ENCODE measurements at regions of chr21 and their contacts with region 1.

Region 1: DNA sequence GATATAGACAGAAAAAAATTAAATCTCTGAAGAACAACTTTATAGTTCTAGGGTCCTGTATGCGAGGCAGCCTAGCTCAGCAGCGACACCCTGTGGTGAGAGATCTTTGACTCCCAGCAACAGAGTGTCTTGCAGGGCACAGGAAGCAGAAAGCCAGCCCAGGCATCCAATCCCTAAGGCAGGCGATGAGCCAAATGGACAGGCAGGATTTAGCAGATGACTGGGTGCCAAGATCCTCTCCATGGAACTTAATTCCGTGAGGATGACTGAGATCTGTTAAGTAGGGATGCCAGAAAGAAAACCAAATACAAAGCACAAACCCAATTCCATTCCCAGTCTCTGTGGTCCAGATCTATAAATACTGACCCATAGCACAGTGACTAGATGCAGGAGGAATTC is 38.8 kb downstream of the HLCS start:
- DNase-seq: peak; percentile 89
- H3K4me3 ChIP-seq: no peak overlapping the region
- H3K27ac ChIP-seq: peak overlapping the region; percentile 57 to 72
- H3K4me1 ChIP-seq: peaks cover 7% of the 10 kb centered on the region
- H3K27me3 ChIP-seq: no peaks in the 10 kb centered on the region
- CTCF ChIP-seq: peak; percentile 78 to 93 (median 90)
- POLR2A ChIP-seq: no peak

Region 2: DNA sequence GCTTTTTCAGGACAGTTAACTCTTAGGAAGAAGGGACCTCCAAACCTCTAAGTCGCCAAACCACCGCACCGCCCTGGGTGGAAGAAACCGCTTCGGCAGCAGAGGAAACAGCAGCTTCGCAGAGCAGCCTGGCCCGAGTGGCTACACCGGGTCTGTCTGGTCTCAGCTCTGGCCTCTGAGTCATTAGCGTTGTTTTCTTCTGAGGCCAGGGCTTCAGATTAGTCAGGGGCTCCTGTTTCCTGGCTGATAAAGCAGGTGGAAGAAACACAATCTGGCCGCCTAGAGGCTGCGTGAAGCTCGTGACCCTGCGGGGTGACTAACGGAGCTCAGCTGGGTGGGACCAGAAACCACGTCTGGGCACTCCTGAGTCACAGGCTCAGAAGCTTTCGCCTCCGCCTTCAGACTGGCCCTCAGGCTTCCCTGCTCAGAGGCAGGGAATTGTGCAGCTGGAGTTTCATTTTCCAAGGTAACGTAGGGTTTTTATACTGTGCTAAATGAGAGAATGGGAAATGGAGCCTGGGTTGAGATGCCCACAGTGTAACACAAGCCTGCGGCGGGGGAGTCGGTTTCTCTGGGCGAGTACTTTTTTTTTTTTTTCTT is 497.7 kb before region 1 on chr21:
- intact Hi-C with region 1: loop called (anchors 10 kb)
- DNase-seq: peak; percentile 15
- H3K4me3 ChIP-seq: no peak overlapping the region
- H3K27ac ChIP-seq: no peak overlapping the region
- H3K4me1 ChIP-seq: no peaks in the 10 kb centered on the region
- H3K27me3 ChIP-seq: no peaks in the 10 kb centered on the region
- CTCF ChIP-seq: peak in 1 of 4 experiments; percentile 18
- POLR2A ChIP-seq: no peak

Region 3: GRCh38 chr21:36504067-36505058 is 423.4 kb before region 1 on chr21:
- intact Hi-C with region 1: loop called (anchors 2 kb)
- DNase-seq: peak; percentile 44
- H3K4me3 ChIP-seq: no peak overlapping the region
- H3K27ac ChIP-seq: peak overlapping the region in 1 of 2 donors; percentile 92
- H3K4me1 ChIP-seq: peaks cover 22% of the 10 kb centered on the region
- H3K27me3 ChIP-seq: no peaks in the 10 kb centered on the region
- CTCF ChIP-seq: peak; percentile 92 to 96 (median 94)
- POLR2A ChIP-seq: no peak

Region 4: DNA sequence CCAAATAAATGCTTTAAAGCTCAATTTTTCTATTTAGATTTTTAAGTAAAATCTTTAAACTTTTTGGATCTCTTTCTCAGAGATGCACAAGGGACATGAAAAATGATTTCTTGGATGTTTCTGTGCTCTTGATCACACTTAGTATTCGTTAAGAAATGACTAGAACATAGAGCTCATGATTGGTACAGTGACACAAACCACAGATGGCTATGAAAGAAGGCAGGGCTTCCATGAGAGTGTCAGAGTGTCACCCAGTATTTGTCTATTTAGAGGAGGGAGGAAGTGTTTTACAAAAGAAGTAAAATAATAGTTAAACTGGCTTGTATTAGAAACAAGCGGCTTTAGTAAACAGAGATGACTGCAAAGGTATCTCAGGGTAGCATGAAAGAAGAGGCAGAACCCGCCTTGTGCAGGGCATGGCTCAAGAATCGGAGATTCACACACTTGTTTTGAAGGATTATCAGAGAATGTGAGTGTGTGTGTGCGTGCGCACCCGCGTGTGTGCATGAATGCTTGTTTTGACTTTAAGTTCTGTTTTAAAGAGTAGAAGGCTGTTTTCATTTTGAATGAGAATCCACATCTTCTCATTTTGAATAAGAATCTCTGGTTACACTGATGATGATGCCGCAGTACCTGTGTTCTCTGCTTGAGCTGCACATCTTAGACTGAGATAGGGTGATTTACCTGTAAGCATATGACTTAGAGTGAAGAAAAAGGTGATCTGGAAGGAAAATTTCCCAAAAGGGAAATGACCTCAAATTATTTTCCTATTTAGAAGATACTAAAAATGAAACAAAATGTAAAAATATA is 257.3 kb after region 1 on chr21:
- intact Hi-C with region 1: no loop called
- DNase-seq: no peak
- H3K4me3 ChIP-seq: no peak overlapping the region
- H3K27ac ChIP-seq: no peak overlapping the region
- H3K4me1 ChIP-seq: no peaks in the 10 kb centered on the region
- H3K27me3 ChIP-seq: no peaks in the 10 kb centered on the region
- CTCF ChIP-seq: no peak
- POLR2A ChIP-seq: no peak

Measured in prostate gland (tissue), 2 donors.